Kidney (tissue), 22 donors: ENCODE measurements at regions of chr16 and their contacts with region 1.

Region 1: GRCh38 chr16:20383106-20384029 is 21.2 kb downstream of the PDILT start:
- DNase-seq: peak; percentile 75 to 90 (median 77)
- H3K4me3 ChIP-seq: no peak overlapping the region
- H3K27ac ChIP-seq: no peak overlapping the region
- H3K4me1 ChIP-seq: no peaks in the 10 kb centered on the region
- H3K27me3 ChIP-seq: no peaks in the 10 kb centered on the region
- CTCF ChIP-seq: peak; percentile 90

Region 2: DNA sequence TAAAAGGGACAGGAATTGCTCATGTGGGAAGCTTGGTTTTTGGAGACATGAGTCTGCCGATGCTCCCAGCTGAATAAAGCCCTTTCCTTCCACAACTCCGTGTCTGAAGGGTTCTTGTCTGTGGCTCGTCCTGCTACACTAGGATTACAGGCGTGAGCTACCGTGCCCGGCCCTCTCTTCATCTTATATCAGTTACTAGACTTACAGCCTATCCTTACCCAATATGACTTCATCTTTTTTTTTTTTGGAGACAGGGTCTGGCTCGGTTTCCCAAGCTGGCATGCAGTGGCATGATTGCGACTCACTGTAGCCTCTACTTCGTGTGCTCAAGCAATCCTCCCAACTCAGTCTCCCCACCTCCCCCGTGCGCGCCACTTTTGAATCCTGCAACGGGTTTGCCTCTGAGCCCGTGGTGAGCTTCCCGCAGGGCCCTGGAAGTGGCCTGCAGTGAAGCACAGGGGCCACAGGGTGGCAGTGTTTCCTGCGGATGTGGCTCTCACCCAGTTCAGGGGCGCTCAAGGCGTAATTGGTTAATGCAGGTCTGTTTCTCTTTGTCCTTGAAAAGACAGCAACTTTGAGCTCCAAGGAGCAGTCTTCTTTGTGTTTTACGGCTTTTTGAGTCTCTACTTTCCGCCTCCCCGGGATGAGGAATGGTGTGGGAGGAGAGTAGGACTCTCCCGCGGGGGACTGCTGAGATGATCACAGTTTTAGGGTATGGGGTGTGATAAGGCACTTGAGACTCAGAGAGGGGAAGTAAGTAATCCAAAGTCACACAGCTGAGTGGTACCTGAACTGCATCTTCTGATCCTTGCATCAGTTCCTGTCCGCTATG is 476.0 kb before region 1 on chr16:
- intact Hi-C with region 1: loop called (anchors 10 kb)
- DNase-seq: peak; percentile 69 to 83 (median 81)
- H3K4me3 ChIP-seq: peak overlapping the region in 2 of 3 donors; percentile 20 to 34
- H3K27ac ChIP-seq: no peak overlapping the region
- H3K4me1 ChIP-seq: peaks cover 0 to 2% (median 0%) of the 10 kb centered on the region in 3 donors
- H3K27me3 ChIP-seq: no peaks in the 10 kb centered on the region
- CTCF ChIP-seq: peak; percentile 89